A549 (cell line): ENCODE measurements at regions of chr3 and their contacts with region 1.

Region 1: DNA sequence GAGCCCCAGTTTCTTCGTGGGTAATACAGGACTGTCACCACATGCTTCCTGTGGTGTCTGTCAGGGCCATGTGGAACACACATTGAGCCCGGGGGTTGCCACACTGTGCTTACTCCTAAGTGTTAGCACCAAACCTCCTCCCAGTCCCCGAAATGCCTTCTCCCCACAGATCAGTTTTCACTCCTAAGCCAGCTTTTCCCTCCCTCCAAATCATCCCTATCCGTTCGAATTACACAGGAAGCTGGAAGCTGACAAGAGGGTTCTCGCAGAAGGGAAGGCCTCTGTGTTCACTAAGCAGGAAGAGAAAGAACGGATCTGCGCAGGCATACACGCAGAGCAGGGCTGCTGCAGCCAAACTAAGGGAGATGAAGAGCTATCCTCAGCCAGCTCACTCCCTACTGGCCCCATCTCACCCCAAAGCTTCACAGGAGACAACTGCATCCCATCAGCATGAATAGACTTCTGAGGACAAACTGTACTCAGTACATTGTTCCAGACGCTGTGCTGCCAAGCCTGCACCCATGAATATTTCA is 32.3 kb downstream of the XXYLT1 start:
- DNase-seq: no peak
- ATAC-seq: no peak
- H3K4me3 ChIP-seq: no peak overlapping the region
- H3K27ac ChIP-seq: no peak overlapping the region
- H3K4me1 ChIP-seq: no peaks in the 10 kb centered on the region
- CTCF ChIP-seq: no peak
- EP300 ChIP-seq: no peak
- POLR2A ChIP-seq: no peak
- RAD21 ChIP-seq: no peak

Region 2: GRCh38 chr3:195048059-195048905 is 190.4 kb before region 1 on chr3:
- CTCF ChIA-PET with region 1: no interaction called
- POLR2A ChIA-PET with region 1: no interaction called
- DNase-seq: no peak
- ATAC-seq: no peak
- H3K4me3 ChIP-seq: no peak overlapping the region
- H3K27ac ChIP-seq: no peak overlapping the region
- H3K4me1 ChIP-seq: no peaks in the 10 kb centered on the region
- CTCF ChIP-seq: no peak
- EP300 ChIP-seq: no peak
- POLR2A ChIP-seq: no peak
- RAD21 ChIP-seq: no peak

Region 3: GRCh38 chr3:195204360-195205163 is 34.1 kb before region 1 on chr3:
- CTCF ChIA-PET with region 1: no interaction called
- POLR2A ChIA-PET with region 1: interaction called, 10 read pairs
- DNase-seq: no peak
- ATAC-seq: no peak; a peak in 1 of 6 replicates
- H3K4me3 ChIP-seq: no peak overlapping the region
- H3K27ac ChIP-seq: peak overlapping the region in 1 of 2 experiments; percentile 38; a peak in 3 of 6 replicates
- H3K4me1 ChIP-seq: peaks cover 13% of the 10 kb centered on the region
- CTCF ChIP-seq: no peak
- EP300 ChIP-seq: no peak
- POLR2A ChIP-seq: no peak
- RAD21 ChIP-seq: no peak

Region 4: GRCh38 chr3:195286115-195286872 is 47.6 kb after region 1 on chr3:
- CTCF ChIA-PET with region 1: no interaction called
- POLR2A ChIA-PET with region 1: no interaction called
- DNase-seq: no peak
- ATAC-seq: no peak
- H3K4me3 ChIP-seq: no peak overlapping the region
- H3K27ac ChIP-seq: no peak overlapping the region
- H3K4me1 ChIP-seq: peaks cover 9% of the 10 kb centered on the region; the same call in 1 of the 3 replicates
- CTCF ChIP-seq: no peak
- EP300 ChIP-seq: no peak
- POLR2A ChIP-seq: no peak
- RAD21 ChIP-seq: no peak

Region 5: GRCh38 chr3:195542698-195543499 is 304.2 kb after region 1 on chr3 and contains the start of gene PPP1R2:
- CTCF ChIA-PET with region 1: no interaction called
- POLR2A ChIA-PET with region 1: no interaction called
- DNase-seq: peak; percentile 54 to 88
- ATAC-seq: peak; percentile 88 to 95
- H3K4me3 ChIP-seq: peak within 1 kb of the TSS; percentile 93
- H3K27ac ChIP-seq: peak within 1 kb of the TSS; percentile 86 to 91
- H3K4me1 ChIP-seq: peaks cover 29% of the 10 kb centered on the region; the same call in 2 of the 3 replicates
- CTCF ChIP-seq: no peak
- EP300 ChIP-seq: no peak
- POLR2A ChIP-seq: peak; percentile 93
- RAD21 ChIP-seq: no peak
- polyA plus RNA-seq, gene PPP1R2: 44.0 and 47.3 TPM in 2 replicates